ENCODE measurements at regions of chr1 and their contacts with region 1.

Region 1: GRCh38 chr1:205523891-205524793 is 19.7 kb downstream of the CDK18 start:
- DNase-seq: peak; percentile 71 to 83 (median 76)
- ATAC-seq: peak; percentile 26 to 59 (median 46)
- H3K4me3 ChIP-seq: no peak overlapping the region
- H3K27ac ChIP-seq: no peak overlapping the region
- H3K4me1 ChIP-seq: peaks cover 0 to 74% (median 41%) of the 10 kb centered on the region in 12 donors
- H3K27me3 ChIP-seq: no peaks in the 10 kb centered on the region
- CTCF ChIP-seq: peak; percentile 64 to 88 (median 82)
- POLR2A ChIP-seq: no peak

Region 2: DNA sequence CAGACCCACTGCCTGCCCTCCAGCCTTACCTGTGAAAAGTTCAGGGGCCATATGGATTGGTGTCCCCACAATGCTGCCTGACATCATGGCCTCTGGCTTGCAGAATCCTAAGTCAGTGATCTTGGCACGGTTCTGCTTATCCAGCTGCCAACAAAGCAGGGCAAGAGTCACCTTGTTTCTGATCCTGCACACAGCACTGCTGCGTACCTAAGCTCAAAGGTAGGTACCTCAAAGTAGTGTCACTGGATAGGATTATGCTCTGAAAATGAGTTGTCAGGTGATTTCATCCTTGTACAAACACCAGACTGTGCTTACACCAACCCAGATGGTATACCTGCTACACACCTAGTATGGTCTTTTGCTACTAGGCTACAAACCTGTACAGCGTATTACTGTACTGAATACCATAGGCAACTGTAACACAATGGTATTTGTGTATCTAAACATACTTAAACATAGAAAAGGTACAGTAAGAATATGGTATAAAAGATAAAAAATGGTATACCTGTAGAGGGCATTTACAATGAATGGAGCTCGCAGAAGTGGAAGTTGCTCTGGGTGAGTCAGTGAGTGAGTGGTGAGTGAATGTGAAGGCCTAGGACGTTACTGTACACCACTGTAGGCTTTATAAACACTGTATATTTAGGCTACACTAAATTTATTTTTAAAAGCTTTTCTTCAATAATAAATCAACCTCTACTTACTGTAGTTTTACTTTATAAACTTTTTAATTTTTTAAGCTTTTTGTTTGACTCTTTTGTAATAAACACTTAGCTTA is 373.3 kb before region 1 on chr1:
- intact Hi-C with region 1: no loop called
- DNase-seq: peak in 1 of 5 donors; percentile 18
- ATAC-seq: peak in 3 of 4 donors; percentile 20 to 62 (median 22)
- H3K4me3 ChIP-seq: no peak overlapping the region
- H3K27ac ChIP-seq: no peak overlapping the region
- H3K4me1 ChIP-seq: peaks cover 0 to 4% (median 0%) of the 10 kb centered on the region in 12 donors
- H3K27me3 ChIP-seq: no peaks in the 10 kb centered on the region
- CTCF ChIP-seq: no peak
- POLR2A ChIP-seq: no peak

Region 3: DNA sequence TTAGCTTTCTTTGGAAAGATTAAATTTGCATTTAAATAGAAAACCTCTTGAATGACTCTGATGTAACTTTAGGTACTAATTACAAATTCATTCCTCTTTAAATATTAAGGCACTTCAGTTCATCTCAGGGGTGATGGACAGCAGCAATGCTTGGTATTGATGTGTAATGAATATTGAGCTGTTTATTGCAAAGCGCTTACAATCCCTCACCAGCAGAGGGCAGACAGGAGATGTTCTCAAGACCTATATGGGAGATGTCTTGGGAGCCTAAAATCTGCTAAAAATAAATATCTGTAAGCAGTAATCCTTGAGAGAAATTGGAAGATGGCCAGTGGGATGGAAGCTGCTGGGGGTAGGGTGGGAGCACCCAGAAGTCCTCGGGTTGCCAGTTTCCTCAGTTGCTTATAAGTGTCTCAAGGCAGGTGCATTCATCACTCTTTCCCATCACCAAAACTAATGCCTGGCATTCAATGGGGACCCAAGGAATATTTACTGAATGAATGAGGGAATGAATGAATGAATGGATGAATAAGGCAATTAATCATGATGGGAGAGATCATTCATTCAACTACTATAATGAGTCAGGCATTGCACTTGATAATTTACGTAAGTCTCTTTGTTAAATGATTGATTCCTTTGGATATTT is 169.8 kb before region 1 on chr1:
- intact Hi-C with region 1: loop called in 2 of 10 experiments (anchors 2 to 5 kb)
- DNase-seq: peak in 3 of 5 donors; percentile 45 to 59 (median 54)
- ATAC-seq: peak in 2 of 4 donors; percentile 52 to 67
- H3K4me3 ChIP-seq: no peak overlapping the region
- H3K27ac ChIP-seq: no peak overlapping the region
- H3K4me1 ChIP-seq: peaks cover 0 to 15% (median 0%) of the 10 kb centered on the region in 12 donors
- H3K27me3 ChIP-seq: peaks cover 0 to 16% (median 8%) of the 10 kb centered on the region in 9 donors
- CTCF ChIP-seq: peak; percentile 70 to 92 (median 82)
- POLR2A ChIP-seq: no peak

Region 4: GRCh38 chr1:205493241-205494085 is 30.7 kb before region 1 on chr1:
- intact Hi-C with region 1: loop called (anchors 1 to 2 kb)
- DNase-seq: peak in 3 of 5 donors; percentile 57 to 69 (median 59)
- ATAC-seq: peak in 3 of 4 donors; percentile 36 to 64 (median 53)
- H3K4me3 ChIP-seq: no peak overlapping the region
- H3K27ac ChIP-seq: peak overlapping the region in 8 of 12 donors; percentile 6 to 83 (median 35)
- H3K4me1 ChIP-seq: peaks cover 17 to 49% (median 27%) of the 10 kb centered on the region in 12 donors
- H3K27me3 ChIP-seq: peaks cover 0 to 4% (median 0%) of the 10 kb centered on the region in 9 donors
- CTCF ChIP-seq: no peak
- POLR2A ChIP-seq: no peak

Measured in heart left ventricle (tissue), 16 donors.